Esophagus muscularis mucosa (tissue), 4 donors: ENCODE measurements at regions of chr2 and their contacts with region 1.

Region 1: DNA sequence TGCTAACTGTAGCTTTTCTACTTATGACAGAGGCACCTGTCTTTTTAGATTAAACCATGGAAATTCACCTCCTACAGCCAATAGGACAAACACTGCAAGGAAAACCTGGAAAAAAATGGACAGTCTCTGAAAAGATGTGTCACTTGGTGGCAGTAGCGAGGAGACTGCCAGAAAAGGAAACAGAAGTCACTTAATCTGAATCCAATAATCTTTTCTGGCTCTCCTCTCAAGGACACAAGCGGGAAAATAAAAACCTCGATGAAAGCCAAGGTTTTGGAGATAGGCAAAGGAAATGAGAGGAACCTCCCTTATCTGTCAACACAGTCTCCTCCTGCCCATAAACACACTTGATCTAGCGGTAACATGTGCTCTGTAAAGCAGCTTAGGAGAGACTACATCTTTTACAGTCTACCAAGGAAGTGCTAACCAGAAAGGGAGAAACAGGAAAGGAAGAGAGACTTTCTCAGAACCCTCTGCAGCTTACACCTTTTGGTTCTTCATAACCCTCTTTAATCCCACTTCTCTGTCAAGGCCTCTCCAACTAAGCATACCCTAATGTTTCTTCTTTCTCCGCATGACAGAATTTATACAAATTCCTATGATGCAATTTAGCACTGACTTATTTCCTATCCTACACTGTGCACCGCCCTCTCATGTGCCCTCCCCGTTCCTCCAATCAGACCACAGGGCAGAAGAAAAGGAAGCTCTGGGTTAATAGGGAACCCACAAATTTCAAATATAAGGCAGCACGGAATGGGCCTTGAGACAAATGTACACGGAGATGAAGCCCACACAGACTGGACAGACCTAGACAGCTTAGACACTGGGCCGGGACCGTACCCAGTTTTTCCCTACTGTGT is 52.8 kb downstream of the CLASP1 start:
- DNase-seq: no peak
- H3K4me3 ChIP-seq: peak overlapping the region in 3 of 4 donors; percentile 15 to 35 (median 25)
- H3K27ac ChIP-seq: peak overlapping the region; percentile 41 to 65 (median 54)
- H3K4me1 ChIP-seq: peaks cover 19 to 36% (median 33%) of the 10 kb centered on the region in 4 donors
- H3K27me3 ChIP-seq: no peaks in the 10 kb centered on the region
- CTCF ChIP-seq: peak; percentile 35 to 49 (median 40)
- EP300 ChIP-seq: no peak
- POLR2A ChIP-seq: no peak

Region 2: DNA sequence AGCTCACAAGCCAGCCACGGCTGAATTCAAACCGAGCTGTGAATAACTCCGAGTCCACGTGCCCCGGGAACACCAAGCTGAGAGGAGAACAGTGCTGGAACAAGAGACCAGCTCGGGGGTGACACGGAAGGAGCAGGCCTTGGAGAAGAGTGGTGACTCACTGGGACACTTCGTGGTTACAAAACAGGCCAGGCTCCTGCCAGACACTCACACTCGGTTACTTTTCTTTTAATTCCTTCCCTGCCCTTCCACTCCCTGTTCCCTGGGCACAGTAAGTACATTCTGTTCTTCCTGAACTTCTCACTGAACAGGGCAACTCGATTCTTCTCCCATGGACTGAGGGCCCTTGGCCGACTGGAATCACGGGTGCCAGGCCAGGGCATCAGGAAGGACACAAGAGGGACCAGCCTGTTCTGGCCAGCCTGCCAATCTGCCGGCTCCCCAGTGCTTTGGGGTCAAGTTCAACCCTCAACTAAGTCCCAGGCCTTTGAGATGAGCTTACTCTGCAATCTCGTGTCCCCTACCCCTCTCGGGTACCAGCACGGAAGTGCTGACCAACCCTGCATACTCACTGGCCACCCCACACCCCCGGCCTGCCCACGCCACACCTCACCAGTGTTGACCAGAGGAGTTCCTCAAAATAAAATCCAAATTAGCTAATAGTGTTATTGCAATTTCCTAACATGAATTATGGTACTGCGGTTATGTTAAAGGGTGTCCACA is 398.9 kb before region 1 on chr2:
- intact Hi-C with region 1: no loop called
- DNase-seq: no peak
- H3K4me3 ChIP-seq: no peak overlapping the region
- H3K27ac ChIP-seq: peak overlapping the region in 2 of 4 donors; percentile 18 to 48
- H3K4me1 ChIP-seq: no peaks in the 10 kb centered on the region
- H3K27me3 ChIP-seq: no peaks in the 10 kb centered on the region
- CTCF ChIP-seq: no peak
- EP300 ChIP-seq: no peak
- POLR2A ChIP-seq: no peak

Region 3: GRCh38 chr2:121649596-121650314 is 53.3 kb after region 1 on chr2:
- intact Hi-C with region 1: loop called (anchors 5 kb)
- DNase-seq: peak; percentile 97
- H3K4me3 ChIP-seq: peak overlapping the region; percentile 75 to 94 (median 83)
- H3K27ac ChIP-seq: peak overlapping the region; percentile 88 to 97 (median 95)
- H3K4me1 ChIP-seq: peaks cover 43 to 64% (median 55%) of the 10 kb centered on the region in 4 donors
- H3K27me3 ChIP-seq: no peaks in the 10 kb centered on the region
- CTCF ChIP-seq: peak in 1 of 3 experiments; percentile 1
- EP300 ChIP-seq: peak; percentile 10
- POLR2A ChIP-seq: no peak